Psoas muscle (tissue), 8 donors: ENCODE measurements at regions of chr13 and their contacts with region 1.

Region 1: DNA sequence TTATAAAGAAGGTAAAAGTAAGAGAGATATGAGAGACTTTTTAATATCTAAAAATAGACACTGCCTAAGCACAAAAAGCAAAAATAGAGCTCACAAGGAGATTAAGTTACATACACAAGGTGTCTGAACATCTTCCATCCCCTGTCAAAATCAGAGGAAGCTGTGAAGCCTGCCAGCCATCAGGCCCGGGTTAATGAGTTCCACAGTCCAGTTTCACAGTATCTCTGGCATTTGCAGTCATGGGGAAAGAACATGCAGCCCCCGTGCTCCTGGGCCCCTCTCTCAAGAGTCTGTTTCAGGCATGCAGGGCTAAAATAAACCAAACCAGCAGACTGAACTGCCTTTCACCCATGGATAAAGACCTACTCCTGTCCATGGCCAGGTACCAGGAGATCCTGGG is 79.2 kb downstream of the TBC1D4 start:
- DNase-seq: peak in 1 of 2 donors; percentile 61
- ATAC-seq: peak; percentile 72 to 84 (median 77)
- H3K4me3 ChIP-seq: no peak overlapping the region
- H3K27ac ChIP-seq: peak overlapping the region; percentile 83
- H3K4me1 ChIP-seq: peaks cover 71% of the 10 kb centered on the region
- H3K27me3 ChIP-seq: no peaks in the 10 kb centered on the region
- CTCF ChIP-seq: no peak

Region 2: GRCh38 chr13:75365724-75366173 is 37.0 kb before region 1 on chr13:
- intact Hi-C with region 1: loop called in 1 of 2 experiments (anchors 5 kb)
- DNase-seq: no peak
- ATAC-seq: peak; percentile 86 to 90 (median 88)
- H3K4me3 ChIP-seq: peak overlapping the region; percentile 51
- H3K27ac ChIP-seq: peak overlapping the region; percentile 93
- H3K4me1 ChIP-seq: peaks cover 71% of the 10 kb centered on the region
- H3K27me3 ChIP-seq: no peaks in the 10 kb centered on the region
- CTCF ChIP-seq: peak; percentile 21

Region 3: DNA sequence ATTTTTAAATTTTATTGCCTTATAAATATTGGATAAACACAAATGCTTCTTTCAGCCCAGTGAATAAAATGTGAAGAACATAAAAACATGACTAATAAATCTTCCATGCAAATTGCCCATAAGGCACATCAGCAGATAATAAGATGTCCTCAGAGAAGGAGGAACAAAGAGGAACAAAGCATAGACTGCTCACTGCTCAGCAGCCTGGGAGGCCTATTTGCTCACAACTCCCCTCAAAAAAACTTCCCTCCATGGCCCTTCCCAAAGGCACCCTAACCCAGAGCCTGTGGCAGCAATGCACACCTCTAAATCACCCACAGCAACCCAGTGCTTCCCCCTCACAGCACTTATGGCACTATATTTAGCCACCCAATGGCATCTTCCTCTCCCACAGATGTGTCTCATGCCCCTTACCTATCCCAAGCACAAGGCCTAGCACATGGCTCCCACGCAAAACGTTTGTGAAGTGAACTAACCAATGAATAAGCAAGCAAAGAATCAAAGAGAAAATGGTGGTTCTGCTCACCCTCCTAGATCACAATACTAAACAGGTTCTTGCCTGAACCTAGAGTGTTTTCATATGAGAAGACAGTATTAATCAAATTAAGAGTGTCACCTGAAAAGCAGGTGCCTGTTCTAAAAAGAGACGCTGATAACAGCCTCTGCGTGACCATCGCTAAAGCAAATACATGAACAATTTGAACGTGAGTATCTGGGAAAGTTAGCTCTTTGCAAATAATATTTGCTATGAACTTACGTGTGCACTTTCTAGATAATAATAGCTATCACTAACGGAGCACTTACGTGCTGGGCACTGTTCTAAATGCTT is 17.7 kb before region 1 on chr13:
- intact Hi-C with region 1: loop called in 1 of 2 experiments (anchors 1 kb)
- DNase-seq: no peak
- ATAC-seq: peak; percentile 51 to 72 (median 60)
- H3K4me3 ChIP-seq: no peak overlapping the region
- H3K27ac ChIP-seq: peak overlapping the region; percentile 53
- H3K4me1 ChIP-seq: peaks cover 11% of the 10 kb centered on the region
- H3K27me3 ChIP-seq: no peaks in the 10 kb centered on the region
- CTCF ChIP-seq: no peak